ENCODE measurements at regions of chr2 and their contacts with region 1.

Region 1: DNA sequence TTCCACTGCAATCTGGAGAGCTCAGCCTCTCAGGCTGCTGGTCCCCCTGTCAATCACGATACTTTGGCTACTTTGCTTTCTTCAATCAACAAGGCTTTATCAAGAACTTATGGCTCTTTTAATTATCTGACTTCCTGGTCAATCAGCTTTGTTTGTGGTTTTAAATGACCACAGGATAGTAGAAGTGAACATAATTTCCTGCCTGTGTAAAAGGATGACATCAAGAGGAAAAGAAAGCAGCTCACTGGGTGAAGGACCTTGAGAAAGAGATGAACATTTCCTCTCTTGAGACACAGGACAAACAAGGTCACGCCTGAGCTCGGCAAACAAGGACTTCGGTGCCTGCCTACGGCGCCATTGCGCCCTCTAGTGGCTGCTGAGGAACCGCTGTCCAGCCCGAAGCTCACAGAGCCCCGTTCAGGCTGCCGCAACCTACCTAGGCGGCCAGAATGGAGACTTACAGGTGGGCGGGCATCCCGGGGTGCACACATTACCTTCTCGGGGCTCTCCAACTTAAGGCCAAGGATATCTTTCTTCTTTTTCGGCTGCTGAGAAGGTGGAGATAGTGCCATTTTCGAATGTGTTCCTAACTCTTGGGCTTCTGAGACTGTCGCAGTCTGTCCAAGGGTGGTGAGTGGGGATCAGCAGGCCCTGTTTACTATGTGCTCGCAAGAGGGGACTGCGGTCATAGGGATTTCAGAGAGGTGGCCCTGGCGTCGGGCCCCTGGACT is 54.0 kb downstream of the IL1RL2 start:
- DNase-seq: peak; percentile 77
- H3K4me3 ChIP-seq: no peak overlapping the region
- H3K27ac ChIP-seq: peak overlapping the region; percentile 32
- H3K4me1 ChIP-seq: peaks cover 20% of the 10 kb centered on the region
- H3K27me3 ChIP-seq: no peaks in the 10 kb centered on the region
- CTCF ChIP-seq: peak; percentile 91 to 99

Region 2: GRCh38 chr2:101751875-101752619 is 488.8 kb before region 1 on chr2:
- CTCF ChIA-PET with region 1: no interaction called
- dilution Hi-C with region 1: no loop called
- in situ Hi-C with region 1: no loop called
- intact Hi-C with region 1: no loop called
- DNase-seq: no peak
- H3K4me3 ChIP-seq: no peak overlapping the region
- H3K27ac ChIP-seq: peak overlapping the region; percentile 5
- H3K4me1 ChIP-seq: peaks cover 45% of the 10 kb centered on the region
- H3K27me3 ChIP-seq: no peaks in the 10 kb centered on the region
- CTCF ChIP-seq: no peak

Region 3: GRCh38 chr2:101983928-101984327 is 256.9 kb before region 1 on chr2:
- CTCF ChIA-PET with region 1: no interaction called
- dilution Hi-C with region 1: no loop called
- in situ Hi-C with region 1: no loop called
- intact Hi-C with region 1: loop called (anchors 1 kb)
- DNase-seq: peak; percentile 8
- H3K4me3 ChIP-seq: no peak overlapping the region
- H3K27ac ChIP-seq: no peak overlapping the region
- H3K4me1 ChIP-seq: peaks cover 73% of the 10 kb centered on the region
- H3K27me3 ChIP-seq: no peaks in the 10 kb centered on the region
- CTCF ChIP-seq: peak; percentile 39 to 69

Region 4: GRCh38 chr2:102166189-102166845 is 74.5 kb before region 1 on chr2:
- CTCF ChIA-PET with region 1: interaction called, 11 read pairs
- dilution Hi-C with region 1: no loop called
- in situ Hi-C with region 1: no loop called
- intact Hi-C with region 1: loop called (anchors 1 kb)
- DNase-seq: peak; percentile 66
- H3K4me3 ChIP-seq: no peak overlapping the region
- H3K27ac ChIP-seq: peak overlapping the region; percentile 17
- H3K4me1 ChIP-seq: peaks cover 4% of the 10 kb centered on the region
- H3K27me3 ChIP-seq: no peaks in the 10 kb centered on the region
- CTCF ChIP-seq: peak; percentile 60 to 76

Region 5: GRCh38 chr2:102355526-102356380 is 114.9 kb after region 1 on chr2 and contains the start of gene IL18R1:
- CTCF ChIA-PET with region 1: interaction called, 4 read pairs
- dilution Hi-C with region 1: no loop called
- in situ Hi-C with region 1: no loop called
- intact Hi-C with region 1: loop called (anchors 1 kb)
- DNase-seq: peak; percentile 65
- H3K4me3 ChIP-seq: peak within 1 kb of the TSS; percentile 84 to 88 (median 85)
- H3K27ac ChIP-seq: peak within 1 kb of the TSS; percentile 58
- H3K4me1 ChIP-seq: peaks cover 8% of the 10 kb centered on the region
- H3K27me3 ChIP-seq: no peaks in the 10 kb centered on the region
- CTCF ChIP-seq: peak; percentile 55 to 85
- total RNA-seq, gene IL18R1: 1.2 to 3.9 TPM

Measured in mammary epithelial cell (primary cell).